Heart left ventricle (tissue), 16 donors: ENCODE measurements at regions of chr6 and their contacts with region 1.

Region 1: DNA sequence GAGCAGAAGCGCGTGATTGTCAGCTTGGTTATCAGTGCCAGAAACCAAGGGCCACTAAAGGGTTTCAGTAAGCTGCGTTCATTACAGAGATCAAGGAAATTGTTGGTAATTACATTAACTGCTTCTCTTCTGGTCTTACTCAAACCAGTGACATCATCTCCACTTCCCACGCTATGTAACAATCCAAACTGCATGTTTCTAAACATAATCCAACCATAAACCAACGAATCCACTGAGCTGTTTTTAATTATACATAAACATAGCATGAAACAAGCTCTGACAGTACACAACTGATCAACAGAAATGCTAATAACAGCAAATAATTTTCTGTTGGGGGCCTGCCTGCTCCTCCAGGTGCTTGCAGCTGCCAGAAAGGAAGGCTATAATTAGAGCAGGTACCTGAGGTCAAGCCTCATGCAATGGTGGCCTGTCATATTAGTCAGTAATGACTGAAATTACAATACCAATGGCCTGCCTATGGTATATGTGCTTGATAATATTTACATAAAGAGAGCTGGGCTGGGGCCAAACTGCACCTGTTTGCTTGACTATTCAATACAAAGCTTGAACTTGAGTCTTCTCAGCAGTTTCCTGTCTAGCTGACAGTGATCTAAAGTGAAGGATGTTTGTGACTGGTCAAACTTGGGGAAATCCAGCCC is 40.1 kb downstream of the ILRUN start:
- DNase-seq: no peak
- ATAC-seq: peak; percentile 43 to 65 (median 56)
- H3K4me3 ChIP-seq: peak overlapping the region in 10 of 12 donors; percentile 34 to 63 (median 50)
- H3K27ac ChIP-seq: peak overlapping the region; percentile 89 to 98 (median 92)
- H3K4me1 ChIP-seq: peaks cover 6 to 71% (median 35%) of the 10 kb centered on the region in 12 donors
- H3K27me3 ChIP-seq: no peaks in the 10 kb centered on the region
- CTCF ChIP-seq: no peak
- POLR2A ChIP-seq: no peak

Region 2: DNA sequence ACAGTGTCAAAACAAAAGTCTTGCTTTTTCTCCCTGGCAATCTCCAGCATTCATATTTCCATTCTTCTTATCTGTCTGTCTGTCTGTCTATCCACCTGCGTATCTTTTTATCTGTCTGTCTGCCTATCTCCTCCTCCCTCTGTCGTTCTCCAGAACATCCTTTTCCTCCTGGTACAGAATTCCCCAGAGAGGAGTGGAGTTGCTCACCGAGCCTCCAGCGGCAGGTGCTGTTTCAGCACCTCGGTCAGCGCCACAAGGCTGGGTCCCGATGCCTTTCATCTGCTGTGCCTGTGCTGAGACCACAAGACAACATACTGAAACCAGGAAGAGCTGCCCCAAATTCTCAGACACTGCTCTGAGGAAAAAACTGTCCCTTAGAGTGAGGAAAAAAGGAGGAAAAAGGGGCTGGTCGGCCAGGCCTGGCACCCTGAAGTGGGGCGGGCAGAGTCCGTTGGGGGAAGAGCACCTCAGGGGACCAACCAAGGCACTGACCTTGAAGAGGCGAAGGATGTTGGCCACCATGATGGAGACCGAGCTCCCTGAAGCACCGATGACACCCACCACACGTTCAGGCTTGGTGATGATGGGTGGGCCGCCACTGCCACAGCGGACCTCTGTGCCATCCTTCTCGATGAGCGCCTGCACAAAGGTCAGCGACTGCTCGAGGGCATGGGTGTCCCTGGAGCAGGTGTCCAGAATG is 523.9 kb before region 1 on chr6:
- intact Hi-C with region 1: no loop called
- DNase-seq: peak in 2 of 5 donors; percentile 40 to 47
- ATAC-seq: peak in 1 of 4 donors; percentile 48
- H3K4me3 ChIP-seq: no peak overlapping the region
- H3K27ac ChIP-seq: no peak overlapping the region
- H3K4me1 ChIP-seq: no peaks in the 10 kb centered on the region
- H3K27me3 ChIP-seq: peaks cover 0 to 79% (median 17%) of the 10 kb centered on the region in 9 donors
- CTCF ChIP-seq: no peak
- POLR2A ChIP-seq: no peak

Region 3: DNA sequence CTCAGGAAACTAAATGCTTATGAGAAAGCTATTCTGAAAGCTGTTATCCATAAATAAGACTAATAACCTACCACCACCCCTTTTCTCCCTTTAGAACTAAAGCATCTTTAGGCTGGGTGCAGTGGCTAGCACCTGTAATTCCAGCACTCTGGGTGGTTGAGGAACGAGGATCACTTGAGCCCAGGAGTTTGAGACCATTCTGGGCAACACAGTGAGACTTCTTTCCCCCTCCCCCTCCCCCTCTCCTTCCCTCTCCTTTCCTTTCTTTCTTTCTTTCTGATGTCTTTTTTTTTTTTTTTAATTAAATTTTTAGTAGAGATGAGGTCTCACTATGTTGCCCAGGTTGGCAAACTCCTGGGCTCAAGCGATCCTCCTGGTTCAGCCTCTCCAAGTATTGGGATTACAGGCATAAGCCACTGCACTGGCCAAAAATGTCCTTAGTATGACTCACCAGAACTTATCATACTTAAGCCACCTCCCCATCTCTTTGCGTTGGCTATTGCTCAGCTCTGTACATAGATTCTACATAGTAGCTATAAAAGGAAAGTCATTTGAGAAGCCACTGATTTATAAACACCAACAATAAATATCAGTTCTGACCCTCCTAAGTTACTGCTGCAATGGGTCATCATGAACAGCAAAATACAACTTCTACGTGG is 45.6 kb before region 1 on chr6:
- intact Hi-C with region 1: no loop called
- DNase-seq: no peak
- ATAC-seq: peak in 2 of 4 donors; percentile 44 to 50
- H3K4me3 ChIP-seq: no peak overlapping the region
- H3K27ac ChIP-seq: peak overlapping the region in 2 of 12 donors; percentile 23 to 28
- H3K4me1 ChIP-seq: peaks cover 0 to 30% (median 18%) of the 10 kb centered on the region in 12 donors
- H3K27me3 ChIP-seq: no peaks in the 10 kb centered on the region
- CTCF ChIP-seq: no peak
- POLR2A ChIP-seq: no peak

Region 4: DNA sequence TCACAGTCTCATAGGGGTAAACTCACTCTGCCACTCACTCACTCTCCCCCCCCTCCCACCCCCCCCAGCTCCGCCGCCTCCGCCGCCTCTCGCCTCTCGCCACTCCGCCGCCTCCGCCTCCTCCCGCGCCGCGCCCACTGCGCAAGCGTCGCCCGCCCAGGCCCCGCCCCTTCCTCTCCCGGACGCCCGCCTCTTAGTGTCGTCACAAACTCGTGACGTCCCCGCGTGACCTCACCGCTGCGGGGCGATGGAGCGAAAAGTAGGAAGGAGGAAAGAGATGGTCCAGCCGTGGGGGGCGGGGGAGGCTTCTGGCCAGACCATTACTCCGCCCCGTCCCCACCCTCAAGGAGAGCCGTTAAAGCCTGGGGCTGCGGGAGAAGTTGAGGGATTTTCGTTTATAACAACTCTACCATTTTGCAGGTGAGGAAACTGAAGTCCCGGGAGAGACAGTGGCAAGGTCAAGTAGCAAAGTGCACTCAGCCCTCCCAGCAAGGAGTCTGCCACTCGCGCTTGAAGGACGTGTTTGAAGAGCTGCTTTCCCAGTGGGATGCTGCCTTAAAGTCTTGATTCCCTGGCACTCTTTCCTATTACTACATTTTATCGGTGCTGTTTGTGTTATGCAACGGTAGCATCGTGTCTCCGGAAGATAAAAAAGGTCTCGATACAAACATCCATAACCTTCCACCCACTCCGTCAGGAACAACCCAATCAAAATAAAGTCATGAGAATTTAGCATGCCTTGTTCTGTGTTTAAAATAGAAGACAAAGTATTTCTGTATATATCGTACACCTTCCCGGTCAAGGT is 40.4 kb after region 1 on chr6 and contains the start of gene ILRUN:
- intact Hi-C with region 1: loop called in 7 of 10 experiments (anchors 5 kb)
- DNase-seq: peak; percentile 96 to 99 (median 98)
- ATAC-seq: peak; percentile 89 to 96 (median 96)
- H3K4me3 ChIP-seq: peak within 1 kb of the TSS; percentile 81 to 99 (median 93)
- H3K27ac ChIP-seq: peak within 1 kb of the TSS; percentile 84 to 99 (median 96)
- H3K4me1 ChIP-seq: peaks cover 7 to 45% (median 29%) of the 10 kb centered on the region in 12 donors
- H3K27me3 ChIP-seq: no peaks in the 10 kb centered on the region
- CTCF ChIP-seq: no peak
- POLR2A ChIP-seq: peak in 1 of 2 donors; percentile 90
- total RNA-seq, gene ILRUN: 91.2 to 191 (median 116) TPM